MCF 10A (cell line): ENCODE measurements at regions of chr9 and their contacts with region 1.

Region 1: DNA sequence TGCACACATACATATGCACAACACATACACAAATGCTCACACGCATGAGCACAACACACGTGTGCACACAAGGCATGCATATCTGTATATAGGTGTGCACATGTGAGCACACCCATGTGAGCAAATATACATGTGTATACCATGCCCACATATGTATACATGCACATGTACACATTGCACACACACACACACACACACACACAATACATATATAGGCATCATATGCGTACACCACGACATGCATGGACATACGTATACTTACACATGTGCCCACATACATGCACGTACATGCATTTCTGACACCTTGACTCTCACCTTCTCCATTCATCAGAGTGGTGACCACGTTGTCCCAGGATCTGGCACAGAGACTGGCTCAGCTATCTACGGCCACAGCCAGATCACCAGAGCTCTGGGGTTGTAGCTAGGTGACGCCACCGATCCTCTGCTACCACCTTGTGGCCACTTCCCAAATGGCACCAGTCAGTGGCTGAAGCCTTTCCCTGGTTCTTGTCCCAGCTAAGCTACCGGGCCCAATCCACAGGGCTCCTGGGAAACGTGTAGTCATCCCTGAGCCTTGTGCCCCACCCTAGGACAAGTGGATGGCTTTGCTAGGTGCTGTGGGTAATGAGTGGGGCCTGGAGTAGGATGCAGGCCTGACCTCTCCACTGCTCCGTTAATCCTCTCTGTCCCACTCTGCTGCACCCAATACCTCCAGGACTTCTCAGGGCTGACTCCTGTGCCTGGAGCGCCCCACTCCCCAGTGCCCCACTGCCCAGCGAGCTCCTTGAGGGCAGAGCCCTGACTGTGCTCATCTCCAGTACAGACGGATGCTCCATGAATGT is 194.4 kb downstream of the RGS3 start:
- DNase-seq: peak; percentile 82
- H3K4me3 Mint-ChIP-seq: no peak overlapping the region
- H3K27ac Mint-ChIP-seq: no peak overlapping the region
- H3K4me1 Mint-ChIP-seq: no peaks in the 10 kb centered on the region
- H3K27me3 Mint-ChIP-seq: peaks cover 30% of the 10 kb centered on the region
- CTCF ChIP-seq: peak; percentile 97

Region 2: GRCh38 chr9:113275157-113276131 is 382.5 kb before region 1 on chr9 and contains the starts of genes CDC26 and PRPF4:
- CTCF ChIA-PET with region 1: interaction called, 12 read pairs
- POLR2A ChIA-PET with region 1: interaction called, 8 read pairs
- intact Hi-C with region 1: no loop called
- DNase-seq: peak; percentile 97
- H3K4me3 Mint-ChIP-seq: no peak within 1 kb of the TSS
- H3K27ac Mint-ChIP-seq: no peak within 1 kb of the TSS
- H3K4me1 Mint-ChIP-seq: peaks cover 14% of the 10 kb centered on the region
- H3K27me3 Mint-ChIP-seq: no peaks in the 10 kb centered on the region
- CTCF ChIP-seq: no peak
- total RNA-seq, gene CDC26: 51.6 and 64.8 TPM in 2 replicates
- total RNA-seq, gene PRPF4: 35.6 and 37.3 TPM in 2 replicates

Region 3: GRCh38 chr9:113410207-113410864 is 247.6 kb before region 1 on chr9 and contains the starts of genes C9orf43 and POLE3:
- CTCF ChIA-PET with region 1: interaction called, 27 read pairs
- POLR2A ChIA-PET with region 1: no interaction called
- intact Hi-C with region 1: no loop called
- DNase-seq: peak; percentile 96
- H3K4me3 Mint-ChIP-seq: peak within 1 kb of the TSS; percentile 77
- H3K27ac Mint-ChIP-seq: peak within 1 kb of the TSS; percentile 96
- H3K4me1 Mint-ChIP-seq: peaks cover 18% of the 10 kb centered on the region
- H3K27me3 Mint-ChIP-seq: no peaks in the 10 kb centered on the region
- CTCF ChIP-seq: no peak
- total RNA-seq, gene C9orf43: 0.84 and 1.1 TPM in 2 replicates
- total RNA-seq, gene POLE3: 51.8 and 54.0 TPM in 2 replicates

Region 4: GRCh38 chr9:113492343-113493212 is 165.3 kb before region 1 on chr9:
- CTCF ChIA-PET with region 1: interaction called, 10 read pairs
- POLR2A ChIA-PET with region 1: no interaction called
- intact Hi-C with region 1: no loop called
- DNase-seq: peak; percentile 81
- H3K4me3 Mint-ChIP-seq: no peak overlapping the region
- H3K27ac Mint-ChIP-seq: no peak overlapping the region
- H3K4me1 Mint-ChIP-seq: peaks cover 14% of the 10 kb centered on the region
- H3K27me3 Mint-ChIP-seq: no peaks in the 10 kb centered on the region
- CTCF ChIP-seq: no peak

Region 5: DNA sequence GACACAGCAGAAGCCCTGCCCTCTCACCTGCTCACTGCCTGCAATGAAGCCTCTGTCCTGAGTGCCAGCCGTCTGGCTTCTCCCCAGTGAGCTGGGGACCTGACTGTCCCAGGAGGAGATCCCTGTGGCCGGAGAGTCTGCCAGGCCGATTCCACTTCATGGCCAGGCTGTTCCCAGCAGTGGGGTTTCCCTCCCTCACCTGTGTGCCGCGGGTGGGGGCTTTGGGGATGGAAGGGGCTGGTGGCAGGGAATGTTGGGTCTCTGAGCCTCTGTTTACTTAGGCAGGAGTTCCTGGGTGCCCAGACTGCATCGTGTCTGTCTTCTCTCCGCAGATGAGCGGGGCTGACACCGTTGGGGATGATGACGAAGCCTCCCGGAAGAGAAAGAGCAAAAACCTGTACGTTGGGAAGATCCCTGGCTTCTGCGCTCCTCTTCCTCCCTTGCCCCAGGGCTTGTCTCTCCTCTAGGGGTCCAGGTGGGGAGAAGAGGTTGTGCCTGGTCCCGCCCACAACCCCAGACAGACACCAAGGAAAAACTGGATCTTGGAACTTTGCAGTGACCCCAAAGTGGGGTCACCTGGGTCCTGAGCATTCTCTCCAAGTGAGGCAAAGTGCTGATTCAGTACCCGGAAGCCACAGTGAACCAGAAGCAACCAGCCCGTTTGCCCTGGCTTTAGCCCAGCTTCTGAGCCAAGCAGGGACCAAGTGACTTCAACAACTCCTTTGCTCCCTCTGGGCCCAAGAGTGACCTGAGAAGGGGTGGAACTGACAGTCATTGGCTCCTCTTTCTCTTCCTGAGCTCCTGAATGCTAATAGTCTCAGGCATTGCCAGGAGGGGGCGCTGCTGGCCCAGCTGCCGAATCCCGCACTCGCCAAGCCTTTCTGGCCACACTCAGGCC is 66.7 kb before region 1 on chr9:
- CTCF ChIA-PET with region 1: interaction called, 341 read pairs
- POLR2A ChIA-PET with region 1: interaction called, 7 read pairs
- intact Hi-C with region 1: loop called (anchors 1 kb)
- DNase-seq: peak; percentile 72
- H3K4me3 Mint-ChIP-seq: no peak overlapping the region
- H3K27ac Mint-ChIP-seq: no peak overlapping the region
- H3K4me1 Mint-ChIP-seq: no peaks in the 10 kb centered on the region
- H3K27me3 Mint-ChIP-seq: no peaks in the 10 kb centered on the region
- CTCF ChIP-seq: peak; percentile 84

Region 6: DNA sequence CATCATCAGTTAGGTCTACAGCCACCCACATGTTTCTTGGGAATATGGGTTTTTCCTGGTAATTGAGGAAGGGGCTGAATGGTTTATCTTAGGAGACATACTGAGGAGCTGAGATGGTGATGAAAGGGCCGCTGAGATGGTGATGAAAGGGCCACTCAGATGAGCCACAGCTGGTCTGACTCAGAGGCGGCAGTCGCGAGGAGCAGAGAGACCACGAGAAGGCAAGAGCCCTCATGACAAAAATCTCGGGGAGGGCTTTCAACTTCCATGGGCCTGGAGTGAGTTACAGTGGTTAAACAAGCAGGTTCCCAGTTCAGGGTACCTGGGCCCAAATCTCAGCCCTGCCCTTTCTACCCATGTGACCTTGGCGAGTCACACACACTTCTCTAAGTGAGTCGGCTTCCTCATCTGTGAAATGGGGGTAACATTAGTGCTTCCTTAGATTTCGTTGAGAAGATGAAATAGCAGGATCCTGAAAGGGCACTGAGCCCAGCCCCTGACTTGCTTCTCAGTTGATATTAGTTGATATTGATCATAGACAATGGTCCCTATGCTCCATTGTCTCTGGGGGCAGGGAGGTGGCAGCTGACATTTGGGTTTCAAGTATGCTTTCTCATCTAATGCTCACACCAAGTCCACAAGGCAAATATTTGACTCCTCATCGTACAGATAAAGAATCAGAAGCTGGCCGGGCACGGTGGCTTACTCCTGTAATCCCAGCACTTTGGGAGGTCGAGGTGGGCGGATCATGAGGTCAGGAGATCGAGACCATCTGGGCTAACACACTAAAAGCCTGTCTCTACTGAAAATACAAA is 24.9 kb before region 1 on chr9:
- CTCF ChIA-PET with region 1: interaction called, 26 read pairs
- POLR2A ChIA-PET with region 1: no interaction called
- intact Hi-C with region 1: no loop called
- DNase-seq: no peak
- H3K4me3 Mint-ChIP-seq: no peak overlapping the region
- H3K27ac Mint-ChIP-seq: no peak overlapping the region
- H3K4me1 Mint-ChIP-seq: peaks cover 4% of the 10 kb centered on the region
- H3K27me3 Mint-ChIP-seq: no peaks in the 10 kb centered on the region
- CTCF ChIP-seq: no peak

Region 7: GRCh38 chr9:113737517-113738271 is 79.8 kb after region 1 on chr9:
- CTCF ChIA-PET with region 1: no interaction called
- POLR2A ChIA-PET with region 1: no interaction called
- intact Hi-C with region 1: no loop called
- DNase-seq: peak; percentile 75
- H3K4me3 Mint-ChIP-seq: no peak overlapping the region
- H3K27ac Mint-ChIP-seq: no peak overlapping the region
- H3K4me1 Mint-ChIP-seq: peaks cover 6% of the 10 kb centered on the region
- H3K27me3 Mint-ChIP-seq: peaks cover 3% of the 10 kb centered on the region
- CTCF ChIP-seq: peak; percentile 72

Region 8: DNA sequence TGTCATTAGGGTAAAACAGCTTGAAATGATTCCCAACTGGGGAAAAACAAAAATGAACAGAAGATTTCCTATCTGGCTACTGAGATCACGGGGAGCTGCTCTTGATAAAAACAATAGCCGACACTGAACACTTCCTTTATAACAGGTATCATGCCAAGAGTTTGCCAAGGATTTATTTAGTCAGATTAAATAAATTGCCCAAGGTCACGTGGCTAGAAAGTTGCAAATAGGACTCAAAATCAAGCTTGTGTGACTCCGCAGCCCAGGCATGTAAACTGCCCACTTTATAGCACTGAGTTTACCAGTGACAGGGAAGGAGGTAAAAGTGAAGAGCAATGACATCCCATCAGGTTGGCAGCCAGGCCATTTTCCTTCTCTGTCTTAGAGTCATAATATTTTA is 97.5 kb after region 1 on chr9:
- CTCF ChIA-PET with region 1: no interaction called
- POLR2A ChIA-PET with region 1: no interaction called
- intact Hi-C with region 1: no loop called
- DNase-seq: no peak
- H3K4me3 Mint-ChIP-seq: no peak overlapping the region
- H3K27ac Mint-ChIP-seq: no peak overlapping the region
- H3K4me1 Mint-ChIP-seq: no peaks in the 10 kb centered on the region
- H3K27me3 Mint-ChIP-seq: peaks cover 76% of the 10 kb centered on the region
- CTCF ChIP-seq: no peak

Region 9: DNA sequence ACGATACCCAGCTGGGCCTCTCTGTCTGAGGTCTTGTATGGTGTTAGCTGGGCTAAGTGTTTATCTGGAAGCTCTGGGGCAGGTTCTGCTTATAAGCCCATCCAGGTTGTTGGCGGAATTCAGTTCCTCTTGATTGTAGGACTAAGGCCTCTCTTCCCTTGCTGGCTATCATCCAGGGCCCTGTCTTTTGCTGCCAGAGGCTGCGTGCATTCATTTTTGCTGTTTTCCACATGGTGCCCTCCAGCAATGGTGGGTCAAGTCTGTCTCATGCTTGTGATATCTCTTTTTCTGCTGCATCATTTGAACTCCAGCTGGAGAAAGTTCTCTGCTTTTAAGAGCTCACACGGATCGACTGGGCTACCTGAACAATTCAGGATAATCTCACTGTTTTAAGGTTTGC is 112.5 kb after region 1 on chr9:
- CTCF ChIA-PET with region 1: no interaction called
- POLR2A ChIA-PET with region 1: no interaction called
- intact Hi-C with region 1: no loop called
- DNase-seq: no peak
- H3K4me3 Mint-ChIP-seq: no peak overlapping the region
- H3K27ac Mint-ChIP-seq: no peak overlapping the region
- H3K4me1 Mint-ChIP-seq: peaks cover 10% of the 10 kb centered on the region
- H3K27me3 Mint-ChIP-seq: peaks cover 26% of the 10 kb centered on the region
- CTCF ChIP-seq: no peak